Activated naive CD4-positive, alpha-beta T cell treated with anti-CD3 and anti-CD28 coated beads, Interleukin-2, amount 10 ng/mL, durations not matched to agents 7 days and 5 days (primary cell): ENCODE measurements at regions of chr11 and their contacts with region 1.

Region 1: GRCh38 chr11:102940714-102941588 is 14.6 kb downstream of the MMP13 start:
- DNase-seq: peak; percentile 46
- H3K4me3 Mint-ChIP-seq: no peak overlapping the region
- H3K27ac Mint-ChIP-seq: no peak overlapping the region
- H3K4me1 Mint-ChIP-seq: no peaks in the 10 kb centered on the region
- H3K27me3 Mint-ChIP-seq: peaks cover 6% of the 10 kb centered on the region

Region 2: DNA sequence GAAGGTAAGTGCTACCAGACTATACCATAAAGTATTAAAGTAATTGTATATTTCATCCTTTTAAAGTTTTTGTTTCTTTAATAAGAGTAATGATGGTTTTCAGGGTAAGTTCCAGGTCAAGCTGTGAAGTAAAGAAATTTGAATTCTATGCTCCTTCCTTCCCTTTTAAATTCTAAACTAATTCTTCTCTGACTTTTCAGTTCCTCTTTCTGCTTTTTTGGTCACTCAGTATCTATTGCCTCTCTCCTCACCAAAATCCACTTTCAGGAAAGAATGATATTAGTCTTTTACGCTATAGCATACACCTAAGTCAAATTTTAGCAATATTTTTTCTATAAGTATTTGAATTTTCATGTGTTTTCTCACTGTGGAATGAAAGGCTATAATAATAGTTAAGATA is 224.4 kb before region 1 on chr11:
- CTCF ChIA-PET with region 1: no interaction called
- DNase-seq: no peak
- H3K4me3 Mint-ChIP-seq: no peak overlapping the region
- H3K27ac Mint-ChIP-seq: no peak overlapping the region
- H3K4me1 Mint-ChIP-seq: no peaks in the 10 kb centered on the region
- H3K27me3 Mint-ChIP-seq: peaks cover 7% of the 10 kb centered on the region

Region 3: GRCh38 chr11:102914238-102915043 is 26.5 kb before region 1 on chr11:
- CTCF ChIA-PET with region 1: interaction called, 18 read pairs
- DNase-seq: no peak
- H3K4me3 Mint-ChIP-seq: no peak overlapping the region
- H3K27ac Mint-ChIP-seq: no peak overlapping the region
- H3K4me1 Mint-ChIP-seq: no peaks in the 10 kb centered on the region
- H3K27me3 Mint-ChIP-seq: peaks cover 11% of the 10 kb centered on the region

Region 4: DNA sequence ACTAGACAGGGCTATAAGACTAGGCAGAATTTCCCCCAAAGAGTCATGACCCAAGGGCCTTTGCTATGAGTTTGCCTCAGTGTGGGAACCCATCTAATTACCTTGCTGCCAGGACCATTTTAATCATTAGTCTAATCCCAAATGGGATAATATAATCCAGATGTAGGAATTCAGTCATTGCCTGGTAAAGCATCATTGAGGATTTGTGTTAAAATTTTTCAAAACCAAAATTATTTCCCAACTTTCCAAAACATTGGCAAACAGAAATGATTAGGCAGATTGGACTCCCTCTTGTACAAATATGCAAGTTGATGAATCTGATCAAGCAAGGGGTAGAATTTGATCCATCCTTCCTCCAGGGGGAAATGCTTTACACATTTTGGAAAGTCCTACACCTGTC is 30.8 kb after region 1 on chr11:
- CTCF ChIA-PET with region 1: no interaction called
- DNase-seq: no peak
- H3K4me3 Mint-ChIP-seq: no peak overlapping the region
- H3K27ac Mint-ChIP-seq: no peak overlapping the region
- H3K4me1 Mint-ChIP-seq: no peaks in the 10 kb centered on the region
- H3K27me3 Mint-ChIP-seq: peaks cover 12% of the 10 kb centered on the region